ENCODE measurements at regions of chr16 and their contacts with region 1.

Region 1: DNA sequence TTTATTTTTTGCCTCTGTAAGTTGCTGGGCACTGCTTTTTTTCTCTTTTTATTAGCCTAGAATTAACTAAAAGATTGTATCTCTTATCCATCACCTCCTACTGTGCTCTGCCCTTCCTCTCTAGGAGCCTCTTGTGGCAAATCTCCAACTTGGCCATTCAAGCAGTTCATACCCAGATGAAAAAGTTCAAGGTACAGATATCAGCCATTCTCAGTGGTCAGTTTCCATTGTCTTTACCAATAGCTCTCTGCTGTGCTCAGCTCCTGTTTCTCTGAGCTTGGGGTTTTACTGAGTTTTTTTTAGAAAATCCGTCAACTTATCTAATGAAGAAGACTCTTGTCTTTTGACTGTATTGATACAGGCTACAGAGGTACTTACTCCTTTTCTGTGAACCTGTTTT is 15.6 kb downstream of the MOSMO start:
- DNase-seq: no peak
- H3K4me3 Mint-ChIP-seq: no peak overlapping the region
- H3K27ac Mint-ChIP-seq: peak overlapping the region; percentile 35
- H3K4me1 Mint-ChIP-seq: peaks cover 40% of the 10 kb centered on the region
- H3K27me3 Mint-ChIP-seq: no peaks in the 10 kb centered on the region
- CTCF ChIP-seq: no peak

Region 2: DNA sequence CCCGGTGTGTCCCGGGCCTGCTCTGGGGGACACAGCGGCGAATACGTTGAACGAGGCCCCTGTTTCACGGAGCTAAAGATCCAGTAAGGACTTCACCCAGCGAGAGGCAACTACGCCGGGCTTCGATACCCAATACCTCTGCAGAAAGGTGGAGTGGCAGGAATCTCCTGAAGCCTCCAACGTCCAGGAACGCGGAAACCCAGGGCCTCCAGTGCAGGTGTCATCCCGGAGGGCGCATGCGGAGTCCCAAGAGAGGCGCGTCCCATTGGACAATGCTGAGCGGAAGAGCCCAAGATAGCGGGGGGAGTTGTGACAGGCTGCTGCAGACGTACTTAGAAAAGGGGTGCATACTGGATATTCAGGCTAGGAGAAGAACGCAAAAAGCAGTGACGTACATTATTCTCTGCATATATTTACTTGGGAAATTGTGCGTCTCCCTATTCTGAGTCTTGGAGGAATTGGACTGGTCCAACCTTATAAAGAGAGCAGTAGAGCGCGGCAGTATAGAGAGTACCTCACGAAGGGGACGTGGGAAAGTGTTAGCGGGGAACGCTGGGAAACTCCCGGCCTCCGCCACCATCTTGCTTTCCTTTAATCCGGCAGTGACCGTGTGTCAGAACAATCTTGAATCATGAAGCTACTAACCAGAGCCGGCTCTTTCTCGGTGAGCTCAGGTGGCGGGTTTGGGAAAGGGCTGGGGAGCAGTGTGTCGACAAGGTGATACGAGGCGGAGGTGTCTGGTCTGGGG is 70.5 kb before region 1 on chr16 and contains the start of gene UQCRC2:
- CTCF ChIA-PET with region 1: interaction called, 3 read pairs
- POLR2A ChIA-PET with region 1: interaction called, 10 read pairs
- intact Hi-C with region 1: no loop called
- DNase-seq: peak; percentile 95
- H3K4me3 Mint-ChIP-seq: peak within 1 kb of the TSS; percentile 99
- H3K27ac Mint-ChIP-seq: peak within 1 kb of the TSS; percentile 99
- H3K4me1 Mint-ChIP-seq: peaks cover 7% of the 10 kb centered on the region
- H3K27me3 Mint-ChIP-seq: no peaks in the 10 kb centered on the region
- CTCF ChIP-seq: no peak
- total RNA-seq, gene UQCRC2: 199 and 207 TPM in 2 replicates

Region 3: GRCh38 chr16:22001591-22001990 is 21.9 kb before region 1 on chr16:
- CTCF ChIA-PET with region 1: interaction called, 11 read pairs
- POLR2A ChIA-PET with region 1: interaction called, 72 read pairs
- intact Hi-C with region 1: no loop called
- DNase-seq: no peak
- H3K4me3 Mint-ChIP-seq: peak overlapping the region; percentile 56
- H3K27ac Mint-ChIP-seq: no peak overlapping the region
- H3K4me1 Mint-ChIP-seq: peaks cover 22% of the 10 kb centered on the region
- H3K27me3 Mint-ChIP-seq: no peaks in the 10 kb centered on the region
- CTCF ChIP-seq: no peak

Region 4: GRCh38 chr16:22007509-22008214 is 15.8 kb before region 1 on chr16 and contains the start of gene MOSMO:
- CTCF ChIA-PET with region 1: interaction called, 11 read pairs
- POLR2A ChIA-PET with region 1: interaction called, 72 read pairs
- intact Hi-C with region 1: no loop called
- DNase-seq: peak; percentile 74
- H3K4me3 Mint-ChIP-seq: peak within 1 kb of the TSS; percentile 90
- H3K27ac Mint-ChIP-seq: peak within 1 kb of the TSS; percentile 70
- H3K4me1 Mint-ChIP-seq: peaks cover 26% of the 10 kb centered on the region
- H3K27me3 Mint-ChIP-seq: no peaks in the 10 kb centered on the region
- CTCF ChIP-seq: no peak
- total RNA-seq, gene MOSMO: 16.4 and 17.1 TPM in 2 replicates

Region 5: GRCh38 chr16:22013486-22013885 is 10.0 kb before region 1 on chr16:
- CTCF ChIA-PET with region 1: interaction called, 5 read pairs
- POLR2A ChIA-PET with region 1: interaction called, 72 read pairs
- intact Hi-C with region 1: no loop called
- DNase-seq: no peak
- H3K4me3 Mint-ChIP-seq: no peak overlapping the region
- H3K27ac Mint-ChIP-seq: no peak overlapping the region
- H3K4me1 Mint-ChIP-seq: peaks cover 25% of the 10 kb centered on the region
- H3K27me3 Mint-ChIP-seq: no peaks in the 10 kb centered on the region
- CTCF ChIP-seq: no peak

Region 6: GRCh38 chr16:22063888-22064467 is 40.5 kb after region 1 on chr16:
- CTCF ChIA-PET with region 1: interaction called, 5 read pairs
- POLR2A ChIA-PET with region 1: interaction called, 22 read pairs
- intact Hi-C with region 1: no loop called
- DNase-seq: no peak
- H3K4me3 Mint-ChIP-seq: no peak overlapping the region
- H3K27ac Mint-ChIP-seq: no peak overlapping the region
- H3K4me1 Mint-ChIP-seq: peaks cover 23% of the 10 kb centered on the region
- H3K27me3 Mint-ChIP-seq: no peaks in the 10 kb centered on the region
- CTCF ChIP-seq: no peak

Region 7: GRCh38 chr16:22070361-22071330 is 47.1 kb after region 1 on chr16:
- CTCF ChIA-PET with region 1: interaction called, 5 read pairs
- POLR2A ChIA-PET with region 1: interaction called, 22 read pairs
- intact Hi-C with region 1: no loop called
- DNase-seq: peak; percentile 63
- H3K4me3 Mint-ChIP-seq: no peak overlapping the region
- H3K27ac Mint-ChIP-seq: no peak overlapping the region
- H3K4me1 Mint-ChIP-seq: peaks cover 2% of the 10 kb centered on the region
- H3K27me3 Mint-ChIP-seq: no peaks in the 10 kb centered on the region
- CTCF ChIP-seq: no peak